Esophagus squamous epithelium (tissue), 5 donors: ENCODE measurements at regions of chr3 and their contacts with region 1.

Region 1: DNA sequence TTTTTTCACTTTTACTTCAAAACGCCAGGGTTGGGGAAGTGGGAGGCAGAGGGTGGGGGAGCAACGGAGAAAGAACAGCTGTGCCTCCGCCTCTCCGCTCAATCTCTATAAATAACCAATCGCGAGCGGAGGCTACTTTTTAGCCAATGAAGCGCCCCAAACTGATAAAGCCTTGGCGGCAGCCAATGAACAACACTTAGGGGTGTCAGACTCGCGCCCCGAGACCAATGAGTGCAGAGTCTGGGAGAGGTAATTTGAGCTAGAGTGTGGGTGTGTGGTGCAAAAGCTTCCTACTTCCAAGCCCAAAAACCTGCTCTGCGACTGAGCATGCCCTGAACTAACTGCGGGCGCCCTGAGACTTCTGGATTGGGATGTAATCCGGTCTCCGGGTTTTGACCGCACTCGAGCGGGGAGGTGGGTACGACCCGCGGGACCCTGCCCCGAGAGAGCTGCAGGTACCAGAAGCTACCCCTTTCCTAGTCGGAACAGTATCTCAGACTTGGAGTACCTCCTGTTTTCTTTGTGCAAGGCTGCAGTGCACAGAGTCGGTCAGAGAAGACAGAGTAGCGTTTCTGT is 800 bp upstream of the RAP2B start:
- DNase-seq: peak; percentile 84
- H3K4me3 ChIP-seq: peak overlapping the region; percentile 88 to 97 (median 92)
- H3K27ac ChIP-seq: peak overlapping the region; percentile 97 to 100 (median 98)
- H3K4me1 ChIP-seq: peaks cover 8 to 40% (median 16%) of the 10 kb centered on the region in 3 donors
- H3K27me3 ChIP-seq: no peaks in the 10 kb centered on the region
- CTCF ChIP-seq: no peak
- POLR2A ChIP-seq: peak in 3 of 4 donors; percentile 51 to 79 (median 53)

Region 2: DNA sequence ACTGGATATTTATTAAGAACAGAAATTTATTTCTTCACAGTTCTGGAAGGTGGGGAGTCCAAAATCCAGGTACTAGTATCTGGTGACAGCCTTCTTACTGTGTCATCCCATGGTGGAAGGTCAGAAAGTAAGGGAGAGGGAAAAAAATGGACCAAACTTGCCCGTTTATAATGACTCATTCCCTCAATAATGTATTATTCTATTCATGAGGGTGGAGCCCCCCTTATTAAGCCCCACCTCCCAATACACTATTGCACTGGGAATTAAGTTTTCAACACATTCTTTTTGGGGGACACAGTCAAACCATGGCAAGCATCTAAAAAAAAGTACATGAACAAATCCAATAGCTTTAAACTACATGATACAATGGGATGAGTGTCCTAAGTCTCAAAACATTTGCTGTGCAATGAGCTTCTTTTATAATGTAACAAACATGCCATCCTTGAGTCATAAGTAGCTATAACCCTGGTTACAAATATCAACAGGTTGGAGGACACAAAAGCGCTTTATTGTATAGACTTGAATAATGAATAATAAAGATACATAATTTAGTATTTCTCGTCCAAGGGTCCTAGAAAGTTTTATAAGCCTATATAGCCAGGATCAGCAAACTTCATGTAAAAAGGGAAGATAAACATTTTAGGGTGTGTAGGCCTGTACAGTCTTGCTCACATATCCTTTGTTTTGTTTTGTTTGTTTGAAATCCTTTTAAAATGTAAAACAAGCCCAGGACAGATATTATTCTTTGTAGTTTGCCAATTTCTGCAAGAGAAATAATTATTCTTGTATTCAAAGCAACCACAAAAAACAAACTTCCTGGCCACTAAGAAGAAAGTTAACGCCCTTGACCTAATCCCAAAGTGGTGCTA is 159.8 kb before region 1 on chr3:
- intact Hi-C with region 1: no loop called
- DNase-seq: no peak
- H3K4me3 ChIP-seq: no peak overlapping the region
- H3K27ac ChIP-seq: peak overlapping the region in 2 of 4 donors; percentile 33 to 34
- H3K4me1 ChIP-seq: peaks cover 0 to 15% (median 0%) of the 10 kb centered on the region in 3 donors
- H3K27me3 ChIP-seq: no peaks in the 10 kb centered on the region
- CTCF ChIP-seq: no peak
- POLR2A ChIP-seq: no peak

Region 3: GRCh38 chr3:153052096-153052460 is 109.1 kb before region 1 on chr3:
- intact Hi-C with region 1: loop called (anchors 5 kb)
- DNase-seq: no peak
- H3K4me3 ChIP-seq: no peak overlapping the region
- H3K27ac ChIP-seq: peak overlapping the region; percentile 48 to 85 (median 80)
- H3K4me1 ChIP-seq: peaks cover 10 to 25% (median 11%) of the 10 kb centered on the region in 3 donors
- H3K27me3 ChIP-seq: no peaks in the 10 kb centered on the region
- CTCF ChIP-seq: no peak
- POLR2A ChIP-seq: no peak

Region 4: GRCh38 chr3:153252963-153253362 is 91.7 kb after region 1 on chr3:
- intact Hi-C with region 1: no loop called
- DNase-seq: no peak
- H3K4me3 ChIP-seq: no peak overlapping the region
- H3K27ac ChIP-seq: no peak overlapping the region
- H3K4me1 ChIP-seq: no peaks in the 10 kb centered on the region
- H3K27me3 ChIP-seq: no peaks in the 10 kb centered on the region
- CTCF ChIP-seq: no peak
- POLR2A ChIP-seq: no peak

Region 5: GRCh38 chr3:153285194-153285641 is 124.0 kb after region 1 on chr3:
- intact Hi-C with region 1: loop called (anchors 5 kb)
- DNase-seq: no peak
- H3K4me3 ChIP-seq: no peak overlapping the region
- H3K27ac ChIP-seq: peak overlapping the region; percentile 70 to 87 (median 78)
- H3K4me1 ChIP-seq: peaks cover 0 to 31% (median 15%) of the 10 kb centered on the region in 3 donors
- H3K27me3 ChIP-seq: no peaks in the 10 kb centered on the region
- CTCF ChIP-seq: no peak
- POLR2A ChIP-seq: no peak